ENCODE measurements at regions of chr5 and their contacts with region 1.

Region 1: DNA sequence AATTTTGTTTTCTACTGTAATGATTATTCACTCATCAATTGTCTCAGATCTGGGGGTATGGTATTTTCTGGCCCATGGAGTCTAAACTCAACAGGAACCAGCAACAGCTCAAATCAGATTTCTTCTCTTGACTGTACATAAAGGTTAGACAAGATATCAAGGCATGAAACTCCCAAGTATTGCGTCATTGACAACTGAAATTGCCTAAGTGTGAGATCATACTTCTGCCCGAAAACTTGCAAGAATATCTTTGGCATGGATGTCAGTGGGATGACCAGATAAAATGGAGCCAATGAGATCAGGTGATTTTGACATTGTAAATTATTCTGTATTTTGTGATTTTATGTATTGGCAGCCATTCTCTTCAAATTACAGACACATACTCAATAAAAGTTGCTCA is 141.7 kb upstream of the STK32A start:
- DNase-seq: no peak

Region 2: DNA sequence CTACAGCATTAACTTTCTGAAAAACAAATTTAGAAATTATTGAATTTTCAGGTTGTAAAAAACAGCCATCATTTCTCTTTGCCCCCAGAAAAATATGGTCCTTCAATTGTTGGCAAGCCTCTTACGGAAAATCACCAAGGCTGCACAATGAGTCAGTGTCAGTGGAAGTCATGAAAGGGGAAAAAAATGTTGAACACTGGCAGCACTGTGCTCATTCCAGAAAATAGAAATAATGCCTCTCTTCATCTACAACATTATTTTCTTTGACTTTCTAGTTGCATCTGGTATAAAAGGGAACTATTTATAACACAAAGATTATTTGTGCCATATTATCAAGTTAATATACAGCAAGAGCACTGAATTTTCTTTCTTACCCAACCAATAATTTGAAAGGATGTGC is 115.0 kb after region 1 on chr5:
- intact Hi-C with region 1: loop called (anchors 5 kb)
- DNase-seq: peak in 4 of 10 donors; percentile 33 to 81 (median 56)